ENCODE measurements at regions of chr2 and their contacts with region 1.

Region 1: GRCh38 chr2:74553892-74554645 is at the start of gene LOXL3:
- DNase-seq: peak; percentile 94
- H3K4me3 ChIP-seq: peak within 1 kb of the TSS; percentile 57 to 79 (median 68)
- H3K27ac ChIP-seq: peak within 1 kb of the TSS; percentile 88 to 92 (median 89)
- H3K4me1 ChIP-seq: peaks cover 0 to 28% (median 23%) of the 10 kb centered on the region in 4 donors
- H3K27me3 ChIP-seq: no peaks in the 10 kb centered on the region
- CTCF ChIP-seq: no peak
- EP300 ChIP-seq: peak in 1 of 4 donors; percentile 37
- POLR2A ChIP-seq: no peak
- total RNA-seq, gene LOXL3: 5.4 to 7.9 (median 7.8) TPM

Region 2: GRCh38 chr2:74507145-74507925 is 46.7 kb before region 1 on chr2 and contains the start of gene PCGF1:
- intact Hi-C with region 1: loop called (anchors 1 kb)
- DNase-seq: peak; percentile 99
- H3K4me3 ChIP-seq: peak within 1 kb of the TSS; percentile 60 to 87 (median 76)
- H3K27ac ChIP-seq: peak within 1 kb of the TSS; percentile 96 to 99 (median 97)
- H3K4me1 ChIP-seq: peaks cover 0 to 46% (median 37%) of the 10 kb centered on the region in 4 donors
- H3K27me3 ChIP-seq: peaks cover 6 to 75% (median 34%) of the 10 kb centered on the region in 3 donors
- CTCF ChIP-seq: peak in 2 of 4 experiments; percentile 12 to 17
- EP300 ChIP-seq: no peak
- POLR2A ChIP-seq: no peak
- total RNA-seq, gene PCGF1: 8.9 to 22.8 (median 16.0) TPM

Region 3: GRCh38 chr2:74587664-74588277 is 33.7 kb after region 1 on chr2:
- intact Hi-C with region 1: loop called (anchors 2 kb)
- DNase-seq: peak; percentile 84
- H3K4me3 ChIP-seq: no peak overlapping the region
- H3K27ac ChIP-seq: no peak overlapping the region
- H3K4me1 ChIP-seq: no peaks in the 10 kb centered on the region
- H3K27me3 ChIP-seq: peaks cover 0 to 11% (median 5%) of the 10 kb centered on the region in 3 donors
- CTCF ChIP-seq: peak in 3 of 4 experiments; percentile 65 to 71 (median 67)
- EP300 ChIP-seq: no peak
- POLR2A ChIP-seq: no peak